Caco-2 (cell line): ENCODE measurements at regions of chr4 and their contacts with region 1.

Region 1: DNA sequence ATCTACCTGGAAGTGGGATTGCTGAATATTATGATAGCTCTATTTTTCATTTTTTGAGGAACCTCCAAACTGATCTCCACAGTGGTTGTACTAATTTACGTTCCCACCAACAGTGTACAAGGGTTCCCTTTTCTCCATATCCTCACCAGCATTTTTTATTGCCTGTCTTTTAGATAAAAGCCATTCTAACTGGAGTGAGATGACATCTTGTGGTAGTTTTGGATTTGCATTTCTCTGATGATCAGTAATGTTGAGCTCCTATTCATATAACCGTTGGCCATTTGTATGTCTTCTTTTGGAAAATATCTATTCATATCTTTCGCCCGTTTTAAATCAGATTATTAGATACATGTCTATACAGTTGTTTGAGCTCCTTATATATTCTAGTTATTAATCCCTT is 101.8 kb downstream of the RASGEF1B start:
- DNase-seq: no peak
- H3K4me3 ChIP-seq: no peak overlapping the region
- H3K4me3 Mint-ChIP-seq: no peak overlapping the region
- H3K27ac Mint-ChIP-seq: no peak overlapping the region
- H3K4me1 ChIP-seq: no peaks in the 10 kb centered on the region
- H3K4me1 Mint-ChIP-seq: no peaks in the 10 kb centered on the region
- H3K27me3 ChIP-seq: no peaks in the 10 kb centered on the region
- H3K27me3 Mint-ChIP-seq: peaks cover 3% of the 10 kb centered on the region
- CTCF ChIP-seq: no peak

Region 2: GRCh38 chr4:81069706-81070331 is 300.1 kb before region 1 on chr4:
- CTCF ChIA-PET with region 1: interaction called, 13 read pairs
- POLR2A ChIA-PET with region 1: no interaction called
- intact Hi-C with region 1: loop called (anchors 1 kb)
- DNase-seq: peak; percentile 83 to 84
- H3K4me3 ChIP-seq: no peak overlapping the region
- H3K4me3 Mint-ChIP-seq: no peak overlapping the region
- H3K27ac Mint-ChIP-seq: no peak overlapping the region
- H3K4me1 ChIP-seq: no peaks in the 10 kb centered on the region
- H3K4me1 Mint-ChIP-seq: no peaks in the 10 kb centered on the region
- H3K27me3 ChIP-seq: no peaks in the 10 kb centered on the region
- H3K27me3 Mint-ChIP-seq: peaks cover 9% of the 10 kb centered on the region
- CTCF ChIP-seq: peak; percentile 80

Region 3: GRCh38 chr4:81452452-81453006 is 82.6 kb after region 1 on chr4:
- CTCF ChIA-PET with region 1: no interaction called
- POLR2A ChIA-PET with region 1: no interaction called
- intact Hi-C with region 1: no loop called
- DNase-seq: no peak
- H3K4me3 ChIP-seq: no peak overlapping the region
- H3K4me3 Mint-ChIP-seq: no peak overlapping the region
- H3K27ac Mint-ChIP-seq: no peak overlapping the region
- H3K4me1 ChIP-seq: no peaks in the 10 kb centered on the region
- H3K4me1 Mint-ChIP-seq: no peaks in the 10 kb centered on the region
- H3K27me3 ChIP-seq: no peaks in the 10 kb centered on the region
- H3K27me3 Mint-ChIP-seq: no peaks in the 10 kb centered on the region
- CTCF ChIP-seq: no peak